BJ (cell line): ENCODE measurements at regions of chr15 and their contacts with region 1.

Region 1: GRCh38 chr15:43776718-43777583 is at the start of gene ELL3:
- DNase-seq: no peak
- H3K4me3 ChIP-seq: peak within 1 kb of the TSS; percentile 50
- H3K27me3 ChIP-seq: no peaks in the 10 kb centered on the region
- CTCF ChIP-seq: peak; percentile 88
- polyA plus RNA-seq, gene ELL3: 1.2 and 2.0 TPM in 2 replicates

Region 2: DNA sequence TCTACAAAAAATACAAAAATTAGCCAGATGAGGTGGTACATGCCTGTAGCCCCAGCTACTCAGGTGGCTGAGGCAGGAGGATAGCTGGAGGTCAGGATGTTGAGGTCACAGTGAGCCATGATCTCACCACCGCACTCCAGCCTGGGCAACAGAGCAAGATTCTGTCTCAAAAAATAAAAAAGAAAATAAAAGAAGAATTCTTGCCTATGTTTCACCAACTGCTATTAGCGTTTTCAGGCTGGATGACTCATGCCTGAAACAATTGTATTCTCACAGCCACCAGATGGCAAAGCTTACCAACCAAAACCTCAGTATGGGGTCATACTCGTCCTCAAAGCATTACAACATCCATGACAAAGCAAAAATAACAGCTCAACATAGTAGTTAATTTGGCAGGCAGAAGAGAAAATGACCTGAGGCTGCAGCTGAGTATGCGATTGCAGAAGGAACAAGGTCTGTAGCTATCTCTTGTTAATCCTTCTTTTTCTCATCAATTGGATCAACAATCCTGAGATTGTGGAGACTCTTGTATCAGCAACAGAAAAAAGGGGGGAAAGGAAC is 336.1 kb before region 1 on chr15:
- CTCF ChIA-PET with region 1: no interaction called
- POLR2A ChIA-PET with region 1: no interaction called
- DNase-seq: peak; percentile 94
- H3K4me3 ChIP-seq: no peak overlapping the region
- H3K27me3 ChIP-seq: no peaks in the 10 kb centered on the region
- CTCF ChIP-seq: peak; percentile 51

Region 3: DNA sequence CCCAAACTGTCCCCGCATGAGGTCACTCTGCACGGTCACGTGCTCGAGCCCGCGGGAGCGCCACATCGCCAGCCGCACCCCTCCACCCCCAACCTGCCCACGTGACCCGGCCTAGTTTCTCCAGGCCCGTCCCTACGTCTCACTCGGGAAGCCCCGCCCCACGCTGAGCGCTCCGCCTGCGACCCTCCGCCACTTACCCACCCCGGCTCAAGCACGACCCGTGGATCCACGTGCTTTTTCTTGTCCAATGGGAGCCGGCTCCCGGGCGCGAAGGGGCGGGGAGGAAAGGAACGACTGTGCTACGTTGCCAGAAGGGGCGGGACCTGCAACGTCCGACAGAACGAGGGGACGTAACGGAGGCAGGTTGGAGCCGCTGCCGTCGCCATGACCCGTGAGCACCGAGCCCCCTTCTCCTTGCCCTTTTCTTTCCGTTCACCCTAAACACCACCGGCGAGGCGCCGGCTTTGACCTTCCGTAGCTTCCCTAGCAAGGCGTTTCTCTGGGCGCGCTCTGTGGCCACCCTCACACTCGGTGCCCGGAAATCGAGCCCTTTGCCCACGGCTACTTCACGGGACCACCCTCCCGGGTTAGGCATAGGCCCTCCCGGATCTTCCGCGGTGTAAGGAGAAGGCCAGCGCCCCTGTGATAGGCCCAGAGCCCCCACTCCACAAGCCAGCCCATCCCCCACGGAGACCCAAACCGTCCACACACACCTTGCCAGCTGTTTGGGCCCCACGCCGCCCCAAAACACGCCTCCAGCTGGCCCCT is 15.2 kb after region 1 on chr15 and contains the start of gene SERF2:
- CTCF ChIA-PET with region 1: interaction called, 12 read pairs
- POLR2A ChIA-PET with region 1: interaction called, 8 read pairs
- DNase-seq: peak; percentile 99
- H3K4me3 ChIP-seq: peak within 1 kb of the TSS; percentile 89
- H3K27me3 ChIP-seq: no peaks in the 10 kb centered on the region
- CTCF ChIP-seq: no peak
- polyA plus RNA-seq, gene SERF2: 848 and 929 TPM in 2 replicates